ENCODE measurements at regions of chr13 and their contacts with region 1.

Region 1: DNA sequence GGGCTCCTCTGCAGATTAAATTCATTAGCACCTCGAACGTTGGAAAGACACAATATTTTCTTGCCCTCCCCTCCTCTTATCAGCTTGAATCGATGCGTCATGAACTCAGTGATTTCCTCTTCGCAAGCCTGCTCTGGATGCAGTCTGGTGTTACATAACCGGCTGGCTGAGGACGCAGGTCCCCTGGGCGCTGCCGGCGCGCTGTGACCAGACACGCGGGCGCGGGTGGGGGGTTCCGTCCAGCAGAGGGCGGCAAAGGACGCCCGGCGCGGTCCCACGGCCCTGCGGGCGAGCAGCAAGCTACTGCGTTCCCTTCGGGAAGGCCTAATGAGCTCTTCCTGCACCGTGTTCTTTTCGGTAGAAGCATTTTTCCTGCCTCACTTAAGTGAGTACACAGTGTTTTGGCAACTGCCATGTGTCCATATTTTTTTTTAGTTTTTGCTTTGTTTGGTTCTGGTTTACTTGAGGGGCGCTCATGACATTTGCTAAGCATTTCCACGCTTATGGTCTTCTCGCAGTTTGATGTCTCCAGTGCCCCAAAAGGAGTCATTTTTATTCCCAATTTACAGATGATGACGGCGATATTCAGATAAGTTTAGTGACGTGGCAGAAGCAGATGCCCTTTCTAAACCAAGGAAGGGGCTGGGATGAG is 112.2 kb upstream of the MBNL2 start:
- DNase-seq: peak; percentile 85 to 88
- ATAC-seq: peak; percentile 99

Region 2: DNA sequence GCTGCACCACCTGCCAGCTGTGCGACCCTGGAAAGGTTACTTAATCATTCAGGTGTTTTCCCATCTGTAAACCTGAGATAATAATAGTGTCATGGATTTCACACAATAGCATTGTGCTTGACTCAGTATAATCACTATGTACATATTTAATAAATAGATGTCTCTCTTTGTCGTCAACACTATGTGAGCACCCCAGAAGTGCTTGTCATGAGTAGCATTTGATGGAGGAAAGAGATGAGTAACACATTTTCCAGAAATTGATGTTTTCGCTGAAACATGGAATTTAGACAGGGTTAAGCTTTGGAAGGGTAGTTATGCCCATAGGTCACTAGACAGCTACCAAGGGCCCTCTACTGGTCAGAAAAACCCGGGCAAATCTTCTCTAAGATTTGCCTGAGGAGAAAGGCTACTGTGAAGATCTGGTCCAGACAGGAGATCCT is 102.7 kb after region 1 on chr13:
- intact Hi-C with region 1: loop called in 1 of 2 experiments (anchors 5 kb)
- DNase-seq: peak in 1 of 2 donors; percentile 35
- ATAC-seq: peak; percentile 85

Region 3: DNA sequence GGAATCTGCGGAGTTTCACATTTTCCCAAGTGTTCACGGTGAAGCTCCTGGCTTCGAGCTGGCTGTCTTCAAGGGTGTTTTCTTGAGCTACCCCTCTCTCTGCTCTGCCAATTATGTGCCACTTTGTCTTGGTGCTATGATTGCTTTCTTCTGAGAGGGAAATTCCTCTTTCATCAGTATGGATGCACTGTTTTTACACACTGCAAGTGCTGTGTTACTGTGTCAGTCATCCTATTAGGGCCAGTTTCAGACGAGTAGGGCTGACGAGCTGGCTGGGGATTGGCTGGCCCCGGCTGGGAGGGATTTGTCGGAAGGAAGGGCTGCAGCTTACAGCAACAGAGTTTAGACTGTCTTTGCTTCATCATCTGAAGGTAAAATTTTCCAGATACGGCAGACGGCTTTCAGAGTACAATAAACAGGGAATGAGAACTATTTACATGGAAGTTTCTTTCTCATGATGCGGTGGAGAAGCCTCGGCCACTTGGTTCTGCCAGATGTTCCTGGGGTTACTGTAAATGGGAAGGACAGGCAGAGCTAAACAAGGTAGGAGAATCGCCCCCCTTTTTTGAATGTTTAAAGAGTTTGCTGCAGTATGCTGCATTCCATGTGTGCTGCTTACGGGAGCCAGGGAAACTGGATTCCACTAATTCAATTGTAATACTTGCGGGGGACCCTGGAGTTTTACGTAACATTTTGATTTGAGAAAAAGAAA is 112.2 kb after region 1 on chr13 and contains the start of gene MBNL2:
- intact Hi-C with region 1: loop called in 1 of 2 experiments (anchors 5 kb)
- DNase-seq: peak; percentile 87 to 95
- ATAC-seq: peak; percentile 90
- total RNA-seq, gene MBNL2: 31.4 to 50.1 TPM

Region 4: GRCh38 chr13:97344265-97345175 is 234.6 kb after region 1 on chr13:
- intact Hi-C with region 1: loop called (anchors 5 to 10 kb)
- DNase-seq: peak in 1 of 2 donors; percentile 70
- ATAC-seq: peak; percentile 82

Region 5: GRCh38 chr13:97359181-97360057 is 249.5 kb after region 1 on chr13:
- intact Hi-C with region 1: loop called in 1 of 2 experiments (anchors 5 kb)
- DNase-seq: no peak
- ATAC-seq: peak; percentile 84

Measured in left colon (tissue), 2 donors.